Left colon (tissue), 2 donors: ENCODE measurements at regions of chr3 and their contacts with region 1.

Region 1: GRCh38 chr3:99686955-99687612 is 48.7 kb downstream of the COL8A1 start:
- DNase-seq: peak in 1 of 2 donors; percentile 66
- ATAC-seq: peak; percentile 46

Region 2: GRCh38 chr3:99499235-99500158 is 187.6 kb before region 1 on chr3:
- intact Hi-C with region 1: loop called in 1 of 2 experiments (anchors 10 kb)
- DNase-seq: peak in 1 of 2 donors; percentile 18
- ATAC-seq: peak; percentile 50

Region 3: DNA sequence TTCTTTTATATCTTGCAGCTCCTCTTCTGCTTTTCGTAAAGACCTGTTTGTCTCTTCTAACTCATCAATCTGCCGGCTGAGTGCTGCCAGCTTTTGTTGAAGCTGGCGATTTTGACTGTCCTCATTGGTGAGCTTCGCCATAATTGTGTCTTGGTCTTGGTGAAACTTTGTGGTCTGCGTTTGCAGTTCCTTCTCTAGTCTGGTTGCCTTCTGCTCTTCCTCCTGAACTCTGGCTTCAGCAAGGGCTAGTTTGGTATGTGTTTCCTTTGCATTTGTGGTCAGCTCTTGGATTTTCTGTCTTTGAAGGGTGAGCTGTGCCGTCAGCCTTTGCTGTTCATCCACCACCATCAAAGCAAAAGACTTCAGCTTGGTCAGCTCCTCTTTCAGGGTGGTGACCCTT is 163.5 kb after region 1 on chr3:
- intact Hi-C with region 1: no loop called
- DNase-seq: no peak
- ATAC-seq: no peak